ENCODE measurements at regions of chr12 and their contacts with region 1.

Region 1: DNA sequence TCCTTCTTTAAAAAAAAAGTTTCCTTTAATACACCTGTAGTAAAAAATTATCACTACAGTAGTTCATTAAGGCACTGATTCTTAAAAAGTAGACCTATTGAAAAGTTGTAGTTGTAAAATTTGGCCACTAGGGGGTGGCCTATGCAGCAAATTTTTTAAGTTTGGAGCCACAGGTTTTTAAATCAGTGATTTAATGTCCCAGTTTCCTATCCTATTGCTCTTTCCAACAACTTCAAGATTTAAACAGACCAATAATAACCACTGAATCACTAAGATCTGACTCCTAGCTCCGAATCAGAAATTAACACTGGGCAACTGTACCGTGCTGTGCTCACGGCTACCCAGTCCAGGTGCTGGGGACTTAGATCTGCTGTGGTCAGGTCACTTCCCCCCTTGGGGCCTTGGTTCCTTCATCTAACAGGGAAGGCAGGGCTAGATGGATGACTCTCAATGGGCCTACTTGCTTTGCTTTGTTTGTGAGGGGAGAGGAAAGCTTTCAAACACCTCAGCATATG is 279.3 kb downstream of the MED13L start:
- DNase-seq: no peak
- H3K4me3 Mint-ChIP-seq: no peak overlapping the region
- H3K27ac Mint-ChIP-seq: no peak overlapping the region
- H3K4me1 Mint-ChIP-seq: no peaks in the 10 kb centered on the region
- H3K27me3 Mint-ChIP-seq: no peaks in the 10 kb centered on the region

Region 2: GRCh38 chr12:115885038-115885690 is 113.0 kb before region 1 on chr12:
- intact Hi-C with region 1: no loop called
- DNase-seq: no peak
- H3K4me3 Mint-ChIP-seq: no peak overlapping the region
- H3K27ac Mint-ChIP-seq: no peak overlapping the region
- H3K4me1 Mint-ChIP-seq: no peaks in the 10 kb centered on the region
- H3K27me3 Mint-ChIP-seq: peaks cover 9% of the 10 kb centered on the region

Region 3: DNA sequence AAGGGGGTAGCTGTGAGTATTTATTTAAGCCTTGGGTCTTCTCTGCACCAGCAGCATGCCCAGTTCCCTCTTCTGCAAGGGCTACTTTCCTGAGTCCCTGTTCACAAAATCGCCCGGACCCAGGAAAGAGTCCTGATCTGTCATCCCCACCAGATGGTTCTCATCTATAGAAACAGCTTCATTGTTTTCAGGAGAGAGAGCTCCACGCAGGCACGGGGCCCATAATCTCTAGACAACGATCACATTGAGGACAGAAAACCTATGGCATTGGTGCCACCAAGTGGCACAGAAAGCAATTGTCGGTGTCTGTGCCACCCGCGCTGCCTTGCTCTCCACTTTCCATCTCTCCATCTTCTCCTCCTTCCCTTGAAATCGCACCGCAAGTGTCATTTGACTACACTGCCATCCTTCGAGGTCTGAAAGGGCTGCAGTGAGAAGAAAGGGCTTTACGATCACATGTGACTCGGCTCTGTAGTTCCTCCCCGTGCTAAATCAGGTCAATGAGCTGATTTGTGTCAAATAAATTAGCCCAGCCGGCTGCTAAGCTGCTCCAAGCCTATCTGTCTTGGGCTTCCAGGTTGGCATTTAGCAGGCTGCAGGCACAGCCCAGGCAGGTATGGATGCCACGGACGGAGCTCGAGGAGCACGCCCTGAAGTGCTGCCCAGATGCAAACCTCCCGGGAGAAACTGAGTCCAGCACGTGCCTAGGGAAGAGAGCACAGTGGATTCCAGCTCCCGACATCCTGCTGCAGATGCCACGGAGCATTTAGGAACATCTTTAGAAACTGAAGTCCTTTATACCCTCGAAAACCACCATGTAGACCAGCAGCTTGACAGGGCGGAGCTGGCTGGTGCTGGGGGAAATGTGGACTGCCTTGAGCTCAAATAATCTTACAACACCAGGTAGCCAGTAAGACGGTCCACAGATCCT is 710.9 kb after region 1 on chr12:
- intact Hi-C with region 1: loop called (anchors 2 kb)
- DNase-seq: peak; percentile 14
- H3K4me3 Mint-ChIP-seq: no peak overlapping the region
- H3K27ac Mint-ChIP-seq: no peak overlapping the region
- H3K4me1 Mint-ChIP-seq: peaks cover 11% of the 10 kb centered on the region
- H3K27me3 Mint-ChIP-seq: peaks cover 13% of the 10 kb centered on the region

Measured in activated T-helper 1 cell treated with anti-CD3 and anti-CD28 coated beads, Interleukin-12 subunit alpha, Interleukin-12 subunit beta, Interleukin-2, Interleukin-4 antibody, amounts not matched to agents 30 ng/mL and 10 ng/mL and 1 ng/mL, durations not matched to agents 14 hours and 24 hours and 36 hours (primary cell).